CD4-positive, alpha-beta T cell (primary cell): ENCODE measurements at regions of chr11 and their contacts with region 1.

Region 1: GRCh38 chr11:128246364-128246801 is 341.0 kb downstream of the ETS1 start:
- DNase-seq: no peak
- ATAC-seq: no peak
- H3K4me3 ChIP-seq: no peak overlapping the region
- H3K4me3 Mint-ChIP-seq: no peak overlapping the region
- H3K27ac ChIP-seq: no peak overlapping the region
- H3K27ac Mint-ChIP-seq: no peak overlapping the region
- H3K4me1 ChIP-seq: no peaks in the 10 kb centered on the region
- H3K4me1 Mint-ChIP-seq: no peaks in the 10 kb centered on the region
- H3K27me3 ChIP-seq: no peaks in the 10 kb centered on the region
- H3K27me3 Mint-ChIP-seq: no peaks in the 10 kb centered on the region
- CTCF ChIP-seq: no peak

Region 2: DNA sequence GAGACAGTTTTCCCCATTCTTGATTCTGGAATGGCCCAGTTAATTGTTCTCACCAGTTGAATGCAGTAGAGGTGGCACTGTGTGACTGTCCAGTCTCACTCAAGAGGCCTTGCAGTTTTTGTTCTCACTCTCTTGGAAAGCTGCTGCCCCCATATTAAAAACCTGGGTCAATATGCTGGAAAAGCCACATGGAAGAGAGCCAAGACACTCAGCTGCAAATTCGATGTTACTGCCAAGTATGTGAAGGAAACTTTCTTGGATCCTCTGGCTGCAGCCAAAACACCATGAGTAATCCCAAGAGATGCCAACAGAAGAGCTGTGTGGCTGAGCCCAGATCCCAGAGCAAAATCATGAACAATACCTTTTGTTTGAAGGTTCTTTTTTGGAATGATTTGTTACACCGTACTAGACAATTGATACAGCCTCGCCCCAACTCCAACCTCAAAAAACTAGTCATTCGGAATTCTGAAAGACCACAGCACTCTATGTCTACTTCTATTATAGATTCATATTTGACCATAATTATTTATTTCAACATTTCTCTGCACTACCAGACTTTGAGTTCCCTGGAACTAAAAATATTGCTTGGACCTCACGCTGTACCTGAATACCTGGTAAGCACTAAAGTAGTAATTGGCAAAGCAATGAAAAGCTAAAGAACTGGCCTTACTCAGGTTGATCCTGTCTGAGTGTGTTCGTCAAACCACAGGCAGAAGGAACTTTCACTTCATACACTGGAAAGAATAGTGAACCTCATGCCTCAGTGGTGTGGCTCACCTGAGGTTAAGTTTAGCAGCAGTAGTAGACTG is 37.9 kb before region 1 on chr11:
- CTCF ChIA-PET with region 1: interaction called, 3 read pairs
- POLR2A ChIA-PET with region 1: no interaction called
- intact Hi-C with region 1: loop called in 1 of 2 experiments (anchors 5 kb)
- DNase-seq: no peak
- ATAC-seq: no peak
- H3K4me3 ChIP-seq: no peak overlapping the region
- H3K4me3 Mint-ChIP-seq: no peak overlapping the region
- H3K27ac ChIP-seq: no peak overlapping the region
- H3K27ac Mint-ChIP-seq: no peak overlapping the region
- H3K4me1 ChIP-seq: no peaks in the 10 kb centered on the region
- H3K4me1 Mint-ChIP-seq: no peaks in the 10 kb centered on the region
- H3K27me3 ChIP-seq: no peaks in the 10 kb centered on the region
- H3K27me3 Mint-ChIP-seq: no peaks in the 10 kb centered on the region
- CTCF ChIP-seq: no peak

Region 3: DNA sequence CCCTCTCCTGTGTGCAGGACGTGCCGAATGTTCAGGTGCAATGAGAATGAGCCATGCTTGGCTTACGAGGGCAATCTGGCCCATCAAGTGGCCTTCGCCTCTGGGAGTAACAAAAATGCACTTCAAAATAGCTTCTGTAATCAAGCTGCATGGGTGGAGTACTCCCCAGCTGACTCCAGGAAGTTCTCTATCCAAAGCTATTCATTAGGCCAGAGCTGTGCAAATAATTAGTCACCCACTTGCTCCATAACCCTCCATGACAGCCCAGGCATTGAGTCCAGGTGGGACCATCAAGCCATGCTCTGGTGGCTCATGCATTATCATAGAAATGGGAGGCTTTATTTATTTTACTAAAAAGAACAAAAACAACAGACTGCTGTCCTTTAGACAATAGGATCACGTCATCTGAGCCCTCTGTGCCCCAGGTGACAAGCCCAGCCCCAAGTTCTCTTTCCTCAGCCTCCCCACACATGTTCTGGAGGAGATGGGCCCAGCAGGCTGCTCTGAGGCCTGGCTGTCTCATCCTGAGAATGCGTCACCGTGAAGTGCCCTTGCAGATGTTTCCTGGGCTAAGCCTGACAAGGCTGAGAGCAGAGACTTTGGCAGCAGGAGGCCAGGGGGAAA is 96.2 kb after region 1 on chr11:
- CTCF ChIA-PET with region 1: no interaction called
- POLR2A ChIA-PET with region 1: no interaction called
- intact Hi-C with region 1: no loop called
- DNase-seq: peak in 11 of 14 experiments; percentile 24 to 83 (median 67)
- ATAC-seq: peak; percentile 67
- H3K4me3 ChIP-seq: no peak overlapping the region
- H3K4me3 Mint-ChIP-seq: peak overlapping the region; percentile 73
- H3K27ac ChIP-seq: peak overlapping the region; percentile 79 to 88
- H3K27ac Mint-ChIP-seq: peak overlapping the region; percentile 99
- H3K4me1 ChIP-seq: peaks cover 65% of the 10 kb centered on the region
- H3K4me1 Mint-ChIP-seq: peaks cover 97% of the 10 kb centered on the region
- H3K27me3 ChIP-seq: no peaks in the 10 kb centered on the region
- H3K27me3 Mint-ChIP-seq: no peaks in the 10 kb centered on the region
- CTCF ChIP-seq: no peak